Lower lobe of right lung (tissue), 2 donors: ENCODE measurements at regions of chr6 and their contacts with region 1.

Region 1: DNA sequence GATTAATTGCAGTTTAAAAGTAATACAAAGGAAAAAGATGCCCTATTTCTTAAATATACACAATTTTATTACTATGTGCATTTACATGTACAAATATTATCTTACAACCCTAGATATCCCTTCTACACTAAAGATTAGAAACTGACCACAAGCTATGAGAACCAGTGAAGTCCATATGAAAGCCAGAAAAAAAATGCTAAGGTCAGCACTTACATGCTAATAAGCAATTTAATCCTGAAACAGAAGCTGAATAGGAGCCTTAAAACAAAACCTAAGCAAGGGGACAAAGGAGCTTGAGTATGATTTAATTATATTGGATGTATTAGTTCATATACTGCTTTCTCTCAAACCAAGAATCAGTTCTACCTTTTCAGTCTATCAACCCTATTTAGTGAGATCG is 14.2 kb downstream of the CEP162 start:
- DNase-seq: no peak
- ATAC-seq: no peak
- H3K4me3 ChIP-seq: no peak overlapping the region
- H3K27ac ChIP-seq: no peak overlapping the region
- H3K4me1 ChIP-seq: no peaks in the 10 kb centered on the region
- H3K27me3 ChIP-seq: no peaks in the 10 kb centered on the region
- CTCF ChIP-seq: no peak

Region 2: DNA sequence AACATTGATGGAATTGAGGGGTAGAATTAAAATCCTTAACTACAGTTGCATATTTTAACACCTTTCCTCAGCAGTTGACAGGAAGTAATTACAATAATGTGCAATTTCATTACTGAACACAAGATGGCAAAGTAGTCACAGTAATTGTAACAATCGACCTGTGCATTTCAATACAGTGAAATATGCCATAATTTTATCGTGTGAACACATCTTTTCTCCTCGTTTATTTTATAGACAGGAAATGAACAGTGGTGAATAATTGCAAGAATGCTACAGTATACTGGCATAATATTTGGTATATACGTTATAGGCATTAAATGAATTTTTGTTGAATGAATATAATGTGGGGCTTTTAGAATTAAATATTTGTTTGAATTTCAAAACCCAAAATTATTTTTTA is 328.7 kb before region 1 on chr6:
- intact Hi-C with region 1: loop called (anchors 5 kb)
- DNase-seq: no peak
- ATAC-seq: peak; percentile 38 to 70
- H3K4me3 ChIP-seq: no peak overlapping the region
- H3K27ac ChIP-seq: no peak overlapping the region
- H3K4me1 ChIP-seq: peaks cover 5% of the 10 kb centered on the region
- H3K27me3 ChIP-seq: no peaks in the 10 kb centered on the region
- CTCF ChIP-seq: peak; percentile 72

Region 3: DNA sequence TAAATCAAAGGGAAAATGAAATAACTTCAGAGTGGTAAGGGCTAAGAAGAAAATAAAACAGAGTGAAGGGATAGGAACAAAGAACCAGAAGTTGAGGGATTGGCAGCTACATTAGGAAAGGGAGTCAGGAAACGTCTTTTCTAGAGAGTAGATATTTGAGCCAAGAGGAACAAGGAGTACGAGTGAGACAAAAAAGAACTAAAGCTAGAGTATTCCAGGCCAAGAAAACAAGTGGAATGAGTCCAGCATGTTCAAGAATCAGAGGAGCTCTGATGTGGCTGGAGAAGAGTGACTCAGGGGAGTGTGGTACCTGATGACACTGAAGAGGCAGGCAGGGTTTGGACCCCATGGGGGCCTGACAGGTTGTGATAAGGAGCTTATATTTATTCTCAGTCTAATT is 52.0 kb before region 1 on chr6:
- intact Hi-C with region 1: no loop called
- DNase-seq: no peak
- ATAC-seq: no peak
- H3K4me3 ChIP-seq: no peak overlapping the region
- H3K27ac ChIP-seq: no peak overlapping the region
- H3K4me1 ChIP-seq: no peaks in the 10 kb centered on the region
- H3K27me3 ChIP-seq: no peaks in the 10 kb centered on the region
- CTCF ChIP-seq: no peak